Common myeloid progenitor, CD34-positive (primary cell): ENCODE measurements at regions of chr6 and their contacts with region 1.

Region 1: GRCh38 chr6:166402582-166403277 is 20.0 kb upstream of the MPC1 start:
- DNase-seq: no peak
- H3K4me3 ChIP-seq: no peak overlapping the region
- H3K27ac ChIP-seq: no peak overlapping the region
- H3K4me1 ChIP-seq: peaks cover 0 to 2% (median 0%) of the 10 kb centered on the region in 4 experiments
- H3K27me3 ChIP-seq: no peaks in the 10 kb centered on the region

Region 2: GRCh38 chr6:166056637-166057036 is 346.1 kb before region 1 on chr6:
- CTCF ChIA-PET with region 1: no interaction called
- POLR2A ChIA-PET with region 1: no interaction called
- DNase-seq: no peak
- H3K4me3 ChIP-seq: no peak overlapping the region
- H3K27ac ChIP-seq: no peak overlapping the region
- H3K4me1 ChIP-seq: no peaks in the 10 kb centered on the region
- H3K27me3 ChIP-seq: peaks cover 0 to 5% (median 5%) of the 10 kb centered on the region in 5 experiments

Region 3: GRCh38 chr6:166275714-166276166 is 127.0 kb before region 1 on chr6:
- CTCF ChIA-PET with region 1: interaction called, 38 read pairs
- POLR2A ChIA-PET with region 1: no interaction called
- DNase-seq: peak; percentile 61 to 79 (median 72)
- H3K4me3 ChIP-seq: no peak overlapping the region
- H3K27ac ChIP-seq: no peak overlapping the region
- H3K4me1 ChIP-seq: peaks cover 0 to 4% (median 2%) of the 10 kb centered on the region in 4 experiments
- H3K27me3 ChIP-seq: peaks cover 0 to 3% (median 0%) of the 10 kb centered on the region in 5 experiments

Region 4: GRCh38 chr6:166281104-166281503 is 121.6 kb before region 1 on chr6:
- CTCF ChIA-PET with region 1: interaction called, 38 read pairs
- POLR2A ChIA-PET with region 1: no interaction called
- DNase-seq: no peak
- H3K4me3 ChIP-seq: no peak overlapping the region
- H3K27ac ChIP-seq: no peak overlapping the region
- H3K4me1 ChIP-seq: no peaks in the 10 kb centered on the region
- H3K27me3 ChIP-seq: peaks cover 0 to 14% (median 4%) of the 10 kb centered on the region in 5 experiments

Region 5: DNA sequence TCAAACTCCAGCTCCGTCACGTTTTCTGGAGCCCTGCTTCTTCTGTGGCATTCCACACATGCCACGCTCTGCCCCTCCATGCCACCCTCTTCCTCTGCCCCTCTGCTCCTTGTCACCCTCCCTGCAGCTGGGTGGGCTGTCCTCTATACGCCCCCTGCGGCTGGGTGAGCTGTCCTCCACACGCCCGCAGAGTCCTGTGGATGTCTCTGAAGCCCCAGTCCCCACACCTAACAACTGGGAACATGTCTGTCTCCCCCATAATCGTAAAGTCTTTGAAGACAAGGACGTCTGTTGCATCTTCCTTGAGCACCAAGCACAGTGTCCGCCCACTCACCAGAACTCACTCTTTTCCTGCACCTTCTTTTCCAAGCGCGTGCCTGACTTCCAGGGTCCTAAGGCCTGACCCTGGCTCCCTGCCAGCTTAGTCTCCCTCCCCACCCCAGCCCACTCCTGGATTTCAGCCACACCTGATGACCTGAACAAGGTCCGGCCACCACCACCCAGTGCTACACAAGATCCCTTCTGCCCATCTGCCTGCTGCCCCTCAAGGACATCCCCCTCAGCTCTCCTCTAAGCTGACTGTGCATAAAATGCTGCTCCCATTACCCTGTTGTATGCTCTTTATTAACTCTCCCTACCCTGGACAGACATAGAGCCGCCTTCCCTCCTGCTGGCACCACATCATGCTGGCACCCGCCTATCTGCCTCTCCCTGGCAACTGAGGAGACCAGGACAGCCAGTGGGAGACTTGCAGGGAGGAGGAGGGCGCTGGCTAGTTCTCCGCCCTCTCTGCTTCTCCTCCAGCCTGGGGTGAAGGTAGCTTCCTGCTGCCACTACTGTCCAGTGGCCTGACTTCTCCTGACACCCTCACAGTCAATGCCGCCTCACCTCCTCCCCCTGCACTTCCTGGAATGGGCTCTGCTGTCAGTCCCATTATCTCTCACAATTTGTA is 83.8 kb before region 1 on chr6:
- CTCF ChIA-PET with region 1: interaction called, 118 read pairs
- POLR2A ChIA-PET with region 1: no interaction called
- DNase-seq: no peak
- H3K4me3 ChIP-seq: no peak overlapping the region
- H3K27ac ChIP-seq: no peak overlapping the region
- H3K4me1 ChIP-seq: no peaks in the 10 kb centered on the region
- H3K27me3 ChIP-seq: peaks cover 0 to 3% (median 0%) of the 10 kb centered on the region in 5 experiments

Region 6: GRCh38 chr6:166387642-166388289 is 15.0 kb before region 1 on chr6:
- CTCF ChIA-PET with region 1: interaction called, 20 read pairs
- POLR2A ChIA-PET with region 1: no interaction called
- DNase-seq: no peak
- H3K4me3 ChIP-seq: no peak overlapping the region
- H3K27ac ChIP-seq: no peak overlapping the region
- H3K4me1 ChIP-seq: peaks cover 0 to 9% (median under 1%) of the 10 kb centered on the region in 4 experiments
- H3K27me3 ChIP-seq: peaks cover 0 to 3% (median 3%) of the 10 kb centered on the region in 5 experiments

Region 7: DNA sequence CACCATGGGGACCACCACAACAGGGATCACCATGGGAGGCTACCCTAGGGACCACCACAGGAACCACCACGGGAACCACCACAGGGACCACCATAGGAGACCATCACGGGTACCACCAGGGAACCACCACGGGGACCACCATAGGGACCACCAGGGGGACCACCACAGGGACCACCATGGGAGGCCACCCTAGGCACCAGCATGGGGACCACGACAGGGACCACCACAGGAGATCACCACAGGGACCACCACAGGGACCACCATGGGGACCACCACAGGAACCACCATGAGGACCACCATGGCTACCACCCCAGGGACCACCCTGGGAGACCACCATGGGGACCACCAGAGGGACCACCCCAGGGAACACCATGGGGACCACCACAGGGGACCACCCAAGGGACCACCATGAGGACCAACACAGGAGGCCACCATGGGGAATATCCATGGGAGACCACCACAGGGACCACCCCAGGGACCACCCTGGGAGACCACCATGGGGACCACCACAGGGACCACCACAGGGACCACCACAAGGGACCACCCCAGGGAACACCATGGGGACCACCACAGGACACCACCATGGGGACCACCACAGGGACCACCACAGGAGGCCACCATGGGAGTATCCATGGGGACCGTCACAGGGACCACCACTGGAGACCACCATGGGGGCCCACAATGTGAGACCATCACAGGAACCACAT is 47.6 kb after region 1 on chr6:
- CTCF ChIA-PET with region 1: no interaction called
- POLR2A ChIA-PET with region 1: no interaction called
- DNase-seq: no peak
- H3K4me3 ChIP-seq: no peak overlapping the region
- H3K27ac ChIP-seq: no peak overlapping the region
- H3K4me1 ChIP-seq: no peaks in the 10 kb centered on the region
- H3K27me3 ChIP-seq: no peaks in the 10 kb centered on the region